ENCODE measurements at regions of chr2 and their contacts with region 1.

Region 1: GRCh38 chr2:222939208-222939856 is 78.5 kb downstream of the ACSL3 start:
- DNase-seq: peak; percentile 73
- H3K4me3 Mint-ChIP-seq: no peak overlapping the region
- H3K27ac Mint-ChIP-seq: no peak overlapping the region
- H3K4me1 Mint-ChIP-seq: peaks cover 7% of the 10 kb centered on the region
- H3K27me3 Mint-ChIP-seq: no peaks in the 10 kb centered on the region

Region 2: GRCh38 chr2:222690564-222691200 is 248.7 kb before region 1 on chr2:
- CTCF ChIA-PET with region 1: interaction called, 12 read pairs
- POLR2A ChIA-PET with region 1: no interaction called
- DNase-seq: peak; percentile 77
- H3K4me3 Mint-ChIP-seq: no peak overlapping the region
- H3K27ac Mint-ChIP-seq: no peak overlapping the region
- H3K4me1 Mint-ChIP-seq: peaks cover 13% of the 10 kb centered on the region
- H3K27me3 Mint-ChIP-seq: peaks cover 23% of the 10 kb centered on the region

Region 3: DNA sequence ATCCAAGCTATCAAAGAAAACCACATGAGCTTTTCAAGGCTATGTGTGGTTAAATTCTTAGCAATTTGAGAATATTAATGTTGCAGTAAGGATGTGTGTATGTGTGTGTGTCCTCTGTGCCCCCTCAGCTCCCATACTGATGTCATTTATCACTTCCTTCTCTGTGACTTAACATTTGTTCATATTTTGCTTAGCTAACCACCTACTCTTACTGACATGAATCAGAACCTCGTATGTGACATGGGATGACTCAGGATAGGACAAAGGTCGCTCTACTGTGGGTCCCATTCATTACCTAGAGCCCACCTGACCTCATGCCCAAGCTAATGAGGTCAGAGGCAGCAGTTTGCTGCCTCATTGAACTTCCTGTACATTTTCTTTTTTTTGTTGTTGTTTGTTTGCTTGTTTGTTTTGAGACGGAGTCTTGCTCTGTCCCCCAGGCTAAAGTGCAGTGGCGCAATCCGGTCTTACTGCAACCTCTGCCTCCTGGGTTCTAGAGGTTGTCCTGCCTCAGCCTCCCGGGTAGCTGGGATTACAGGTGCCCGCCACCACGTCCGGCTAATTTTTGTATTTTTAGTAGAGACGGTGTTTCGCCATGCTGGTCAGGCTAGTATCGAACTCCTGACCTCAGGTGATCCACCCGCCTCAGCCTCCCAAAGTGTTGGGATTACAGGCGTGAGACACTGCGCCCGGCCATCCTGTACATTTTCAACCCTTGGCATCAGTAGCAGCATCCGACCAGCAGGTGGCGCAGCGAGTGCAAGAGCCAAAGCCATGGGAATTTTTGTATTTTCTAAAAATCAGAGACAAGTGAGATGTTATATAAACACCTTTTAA is 231.4 kb before region 1 on chr2:
- CTCF ChIA-PET with region 1: interaction called, 34 read pairs
- POLR2A ChIA-PET with region 1: no interaction called
- DNase-seq: peak; percentile 76
- H3K4me3 Mint-ChIP-seq: no peak overlapping the region
- H3K27ac Mint-ChIP-seq: no peak overlapping the region
- H3K4me1 Mint-ChIP-seq: peaks cover 9% of the 10 kb centered on the region
- H3K27me3 Mint-ChIP-seq: peaks cover 44% of the 10 kb centered on the region

Region 4: DNA sequence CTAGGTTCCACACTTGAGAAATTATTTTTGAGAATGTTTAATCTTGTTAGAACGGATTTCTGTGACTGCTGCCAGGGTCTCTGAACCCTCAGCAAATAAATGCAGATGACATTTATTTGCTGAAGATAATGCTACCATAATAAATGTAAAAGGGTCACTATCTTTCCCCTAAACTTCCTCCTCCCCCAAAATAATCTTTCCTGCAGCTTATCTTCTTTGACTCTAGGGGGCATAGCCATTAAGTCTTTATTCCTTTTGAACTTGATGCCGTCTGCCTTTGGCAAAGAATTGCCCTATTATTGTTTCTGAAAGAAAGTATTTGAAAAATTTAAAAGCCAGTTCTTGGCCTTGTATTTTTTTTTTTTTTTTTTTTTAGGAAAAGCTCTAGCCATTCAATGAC is 142.1 kb before region 1 on chr2:
- CTCF ChIA-PET with region 1: interaction called, 12 read pairs
- POLR2A ChIA-PET with region 1: no interaction called
- DNase-seq: no peak
- H3K4me3 Mint-ChIP-seq: no peak overlapping the region
- H3K27ac Mint-ChIP-seq: no peak overlapping the region
- H3K4me1 Mint-ChIP-seq: peaks cover 2% of the 10 kb centered on the region
- H3K27me3 Mint-ChIP-seq: peaks cover 13% of the 10 kb centered on the region

Region 5: GRCh38 chr2:222884114-222884771 is 55.1 kb before region 1 on chr2:
- CTCF ChIA-PET with region 1: no interaction called
- POLR2A ChIA-PET with region 1: no interaction called
- DNase-seq: no peak
- H3K4me3 Mint-ChIP-seq: no peak overlapping the region
- H3K27ac Mint-ChIP-seq: no peak overlapping the region
- H3K4me1 Mint-ChIP-seq: peaks cover 2% of the 10 kb centered on the region
- H3K27me3 Mint-ChIP-seq: no peaks in the 10 kb centered on the region

Region 6: GRCh38 chr2:222912117-222912516 is 27.2 kb before region 1 on chr2:
- CTCF ChIA-PET with region 1: interaction called, 11 read pairs
- POLR2A ChIA-PET with region 1: no interaction called
- DNase-seq: no peak
- H3K4me3 Mint-ChIP-seq: no peak overlapping the region
- H3K27ac Mint-ChIP-seq: no peak overlapping the region
- H3K4me1 Mint-ChIP-seq: peaks cover 6% of the 10 kb centered on the region
- H3K27me3 Mint-ChIP-seq: no peaks in the 10 kb centered on the region

Region 7: DNA sequence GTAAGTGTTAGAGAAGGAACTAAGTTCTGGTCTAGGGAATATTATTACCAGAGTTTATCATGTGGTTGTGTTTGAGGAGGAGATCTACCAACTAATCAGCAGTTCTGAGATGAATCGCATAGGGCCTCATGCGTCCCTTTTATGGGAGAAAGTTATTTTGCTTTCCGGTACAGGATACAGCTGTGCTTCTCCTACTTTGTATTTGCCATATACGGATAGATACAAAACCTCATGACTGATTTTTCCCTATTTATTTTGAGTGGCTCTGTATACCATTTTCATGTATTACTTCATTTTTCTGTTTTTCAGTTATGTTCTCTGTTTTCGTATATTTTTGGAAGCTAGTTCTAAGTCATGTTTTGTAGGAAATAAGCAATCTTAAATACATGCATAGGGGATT is 11.7 kb before region 1 on chr2:
- CTCF ChIA-PET with region 1: interaction called, 13 read pairs
- POLR2A ChIA-PET with region 1: interaction called, 3 read pairs
- DNase-seq: no peak
- H3K4me3 Mint-ChIP-seq: no peak overlapping the region
- H3K27ac Mint-ChIP-seq: no peak overlapping the region
- H3K4me1 Mint-ChIP-seq: no peaks in the 10 kb centered on the region
- H3K27me3 Mint-ChIP-seq: no peaks in the 10 kb centered on the region

Region 8: DNA sequence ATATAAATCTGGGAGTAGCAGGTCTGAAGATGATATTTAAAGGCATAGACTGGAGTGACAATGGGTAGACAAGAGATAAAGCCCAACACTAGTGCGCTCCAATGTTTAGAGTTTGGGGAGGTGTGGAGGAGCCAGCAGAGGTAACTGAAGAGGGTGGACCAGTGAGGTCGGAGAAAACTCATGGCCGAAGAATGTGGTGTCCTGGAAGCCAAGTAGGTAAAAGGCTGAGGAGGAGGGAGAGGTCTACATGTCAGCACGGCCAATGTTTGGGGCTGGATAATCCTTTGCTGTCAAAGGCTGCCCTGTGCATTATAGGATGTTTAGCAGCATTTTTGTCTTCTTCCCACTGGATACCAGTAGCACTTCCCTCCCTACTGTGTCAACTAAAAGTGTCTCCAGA is 33.9 kb after region 1 on chr2:
- CTCF ChIA-PET with region 1: interaction called, 11 read pairs
- POLR2A ChIA-PET with region 1: no interaction called
- DNase-seq: no peak
- H3K4me3 Mint-ChIP-seq: no peak overlapping the region
- H3K27ac Mint-ChIP-seq: no peak overlapping the region
- H3K4me1 Mint-ChIP-seq: no peaks in the 10 kb centered on the region
- H3K27me3 Mint-ChIP-seq: peaks cover 3% of the 10 kb centered on the region